HCT116 (cell line): ENCODE measurements at regions of chr10 and their contacts with region 1.

Region 1: DNA sequence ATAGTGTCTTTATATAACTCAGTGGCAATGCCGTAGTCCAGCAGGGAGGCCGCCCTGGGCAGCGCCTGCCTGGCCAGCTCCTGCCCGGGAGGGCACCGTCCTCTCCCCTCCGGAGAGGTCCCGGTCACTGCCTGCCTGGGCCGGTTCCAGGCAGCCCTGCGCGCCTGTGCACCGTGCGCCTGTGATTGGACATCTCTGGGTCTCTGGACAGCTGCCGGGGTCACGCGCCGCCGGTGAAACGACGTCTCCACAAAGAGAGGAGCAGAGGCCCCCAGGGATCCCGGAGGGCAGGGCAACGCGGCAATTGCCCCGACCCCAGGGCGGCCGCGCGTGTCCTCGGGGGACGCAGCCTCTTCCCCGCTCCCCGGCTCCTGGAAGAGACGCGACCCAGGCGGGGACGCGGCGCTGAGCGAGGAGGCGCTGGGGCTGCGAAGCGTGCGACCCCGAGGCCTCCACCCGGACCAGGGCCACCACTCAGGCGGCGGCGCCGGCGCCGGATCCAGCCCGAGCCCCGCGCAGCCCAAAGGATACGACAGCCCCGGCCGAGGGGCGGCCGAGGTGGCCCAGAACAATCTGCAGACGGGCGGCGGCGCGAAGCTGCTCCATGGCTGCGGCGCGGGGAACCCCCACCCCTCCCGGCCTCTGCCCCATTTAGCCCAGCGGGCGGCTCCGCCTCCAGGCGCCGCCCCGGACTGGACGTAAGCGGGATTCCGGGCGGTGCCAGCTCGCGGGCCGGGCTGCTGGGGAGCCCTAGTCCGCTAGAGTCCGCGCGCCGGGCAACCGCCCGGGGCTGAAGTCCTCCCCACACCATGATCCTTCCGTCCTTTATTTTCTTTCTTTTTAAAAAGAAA is at the start of gene PHYH:
- DNase-seq: peak; percentile 64
- ATAC-seq: peak; percentile 81
- H3K4me3 ChIP-seq: peak within 1 kb of the TSS; percentile 53 to 68
- H3K27ac ChIP-seq: peak within 1 kb of the TSS; percentile 85
- H3K4me1 ChIP-seq: peaks cover 15 to 34% of the 10 kb centered on the region in 2 experiments
- H3K27me3 ChIP-seq: no peaks in the 10 kb centered on the region
- CTCF ChIP-seq: no peak
- POLR2A ChIP-seq: peak; percentile 67
- RAD21 ChIP-seq: no peak
- total RNA-seq, gene PHYH: 15.3 TPM

Region 2: GRCh38 chr10:13146383-13146782 is 153.3 kb before region 1 on chr10:
- CTCF ChIA-PET with region 1: no interaction called
- POLR2A ChIA-PET with region 1: no interaction called
- RAD21 ChIA-PET with region 1: no interaction called
- intact Hi-C with region 1: no loop called
- DNase-seq: no peak
- ATAC-seq: no peak
- H3K4me3 ChIP-seq: no peak overlapping the region
- H3K27ac ChIP-seq: no peak overlapping the region
- H3K4me1 ChIP-seq: peaks cover 4 to 10% of the 10 kb centered on the region in 2 experiments; a peak in 3 of 4 replicates
- H3K27me3 ChIP-seq: no peaks in the 10 kb centered on the region
- CTCF ChIP-seq: no peak
- POLR2A ChIP-seq: no peak
- RAD21 ChIP-seq: no peak

Region 3: GRCh38 chr10:13160934-13161856 is 138.5 kb before region 1 on chr10 and contains the start of gene MCM10:
- CTCF ChIA-PET with region 1: interaction called, 14 read pairs
- POLR2A ChIA-PET with region 1: no interaction called
- RAD21 ChIA-PET with region 1: no interaction called
- intact Hi-C with region 1: loop called (anchors 2 kb)
- DNase-seq: peak; percentile 99
- ATAC-seq: peak; percentile 99
- H3K4me3 ChIP-seq: peak within 1 kb of the TSS; percentile 92 to 94
- H3K27ac ChIP-seq: peak within 1 kb of the TSS; percentile 30
- H3K4me1 ChIP-seq: peaks cover 0 to 15% of the 10 kb centered on the region in 2 experiments; a peak in 3 of 4 replicates
- H3K27me3 ChIP-seq: no peaks in the 10 kb centered on the region
- CTCF ChIP-seq: peak; percentile 68 to 82 (median 75)
- POLR2A ChIP-seq: peak; percentile 24
- RAD21 ChIP-seq: peak; percentile 77
- total RNA-seq, gene MCM10: 43.1 TPM

Region 4: DNA sequence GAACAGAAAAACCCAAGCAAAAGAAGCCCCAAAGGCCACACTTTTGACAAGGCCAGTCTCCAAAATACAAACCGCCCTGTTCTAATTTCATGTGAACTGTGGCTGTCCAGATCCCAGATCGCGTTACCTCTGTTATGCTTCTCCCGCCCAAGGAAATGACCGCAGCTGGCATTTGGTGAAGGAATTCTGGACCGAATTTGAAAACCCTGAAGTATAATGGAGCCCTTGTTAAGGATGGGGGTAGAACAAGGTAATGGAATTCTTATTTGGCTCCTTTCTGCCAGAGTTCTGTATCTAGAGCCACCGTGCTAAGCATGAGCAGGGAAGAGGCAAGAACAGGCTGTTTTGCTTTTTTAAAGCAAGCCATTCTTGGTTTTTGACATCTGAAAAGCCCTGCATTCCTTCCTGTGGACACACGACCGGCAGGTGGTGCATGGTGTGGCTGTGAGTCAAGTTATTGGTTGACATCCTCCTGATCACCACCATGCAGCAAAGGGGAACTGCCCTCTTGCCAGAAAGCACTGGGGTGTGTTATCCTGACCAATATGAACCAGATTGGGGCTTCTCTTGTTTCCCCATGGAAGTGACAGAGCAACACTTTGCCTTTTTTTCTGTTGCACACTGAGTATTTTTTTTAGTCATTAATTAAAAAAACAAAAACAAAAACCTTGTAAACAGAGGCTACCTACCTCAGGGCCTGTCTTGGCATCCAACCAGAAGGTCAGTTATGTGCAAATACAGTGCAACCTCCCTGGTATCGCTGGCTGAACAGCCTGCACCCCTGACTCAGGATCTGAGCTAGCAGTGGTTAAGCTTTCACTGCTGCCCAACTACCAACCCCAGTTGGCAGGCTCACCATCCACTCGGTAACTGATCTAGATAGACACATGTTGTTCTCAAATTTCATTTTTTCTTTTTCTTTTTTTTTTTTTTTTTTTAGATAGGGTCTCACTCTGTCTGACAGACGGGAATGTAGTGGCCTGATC is 79.7 kb before region 1 on chr10:
- CTCF ChIA-PET with region 1: interaction called, 6 read pairs
- POLR2A ChIA-PET with region 1: interaction called, 3 read pairs
- RAD21 ChIA-PET with region 1: no interaction called
- intact Hi-C with region 1: loop called (anchors 5 kb)
- DNase-seq: peak; percentile 49
- ATAC-seq: peak; percentile 95
- H3K4me3 ChIP-seq: peak overlapping the region; percentile 14 to 15; a peak in 2 of 4 replicates
- H3K27ac ChIP-seq: no peak overlapping the region
- H3K4me1 ChIP-seq: peaks cover 4 to 11% of the 10 kb centered on the region in 2 experiments; a peak in 3 of 4 replicates
- H3K27me3 ChIP-seq: no peaks in the 10 kb centered on the region
- CTCF ChIP-seq: peak; percentile 48 to 59 (median 55); a peak in 5 of 6 replicates
- POLR2A ChIP-seq: no peak
- RAD21 ChIP-seq: peak; percentile 49

Region 5: GRCh38 chr10:13348216-13349017 is 48.8 kb after region 1 on chr10 and contains the start of gene SEPHS1:
- CTCF ChIA-PET with region 1: no interaction called
- POLR2A ChIA-PET with region 1: no interaction called
- RAD21 ChIA-PET with region 1: no interaction called
- intact Hi-C with region 1: loop called (anchors 2 kb)
- DNase-seq: peak; percentile 52
- ATAC-seq: peak; percentile 81
- H3K4me3 ChIP-seq: peak within 1 kb of the TSS; percentile 84 to 85
- H3K27ac ChIP-seq: peak within 1 kb of the TSS; percentile 90
- H3K4me1 ChIP-seq: peaks cover 15 to 28% of the 10 kb centered on the region in 2 experiments; a peak in 3 of 4 replicates
- H3K27me3 ChIP-seq: no peaks in the 10 kb centered on the region
- CTCF ChIP-seq: 0 out of 6 replicates have a peak, but pooled peaks of 1 of the 3 experiments have one; percentile 7
- POLR2A ChIP-seq: peak; percentile 40
- RAD21 ChIP-seq: no peak
- total RNA-seq, gene SEPHS1: 51.7 TPM